Tibial artery (tissue), 4 donors: ENCODE measurements at regions of chr11 and their contacts with region 1.

Region 1: DNA sequence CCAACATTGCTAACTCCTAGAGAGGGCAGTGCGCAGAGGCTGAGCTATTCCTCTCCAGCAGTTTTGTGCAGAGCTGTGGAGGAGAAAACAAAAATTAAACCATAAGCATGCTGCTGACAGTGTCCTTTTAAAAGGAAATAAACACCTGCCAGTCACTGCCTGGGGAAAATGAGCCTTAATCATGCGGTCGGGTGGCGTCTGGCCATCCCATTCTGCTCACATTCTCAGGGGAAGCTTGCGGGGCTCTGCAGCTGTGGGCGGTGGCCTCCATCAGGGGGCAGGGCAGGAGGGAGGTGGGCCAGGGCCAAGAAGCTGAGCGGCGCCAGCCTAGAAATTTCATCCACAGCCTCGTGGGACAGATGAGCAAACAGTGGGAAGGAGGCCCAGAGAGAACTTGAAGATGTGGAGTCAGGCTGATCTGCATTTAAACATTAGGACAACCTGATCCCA is 71.0 kb upstream of the TP53I11 start:
- DNase-seq: peak; percentile 89 to 95
- H3K4me3 ChIP-seq: no peak overlapping the region
- H3K27ac ChIP-seq: peak overlapping the region; percentile 41 to 61
- H3K4me1 ChIP-seq: peaks cover 0 to 39% (median 27%) of the 10 kb centered on the region in 4 donors
- H3K27me3 ChIP-seq: no peaks in the 10 kb centered on the region
- CTCF ChIP-seq: peak; percentile 3 to 9

Region 2: DNA sequence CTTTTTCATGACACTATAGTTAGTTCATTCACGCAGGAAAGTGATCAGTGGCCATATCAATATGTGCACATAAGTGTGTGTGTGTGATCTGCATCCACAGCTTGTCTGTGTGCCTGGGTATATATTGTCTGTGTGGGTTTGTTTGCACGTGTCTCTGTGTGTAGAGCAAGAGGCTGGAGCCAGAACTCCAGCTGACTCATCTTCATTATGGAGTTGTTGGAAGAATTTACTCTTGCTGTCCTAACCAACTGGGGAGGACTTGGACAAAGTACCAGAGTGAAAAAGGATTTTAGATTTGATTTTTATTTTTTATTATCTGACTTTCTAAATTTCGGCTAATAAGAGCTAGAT is 135.0 kb before region 1 on chr11:
- intact Hi-C with region 1: no loop called
- DNase-seq: no peak
- H3K4me3 ChIP-seq: no peak overlapping the region
- H3K27ac ChIP-seq: no peak overlapping the region
- H3K4me1 ChIP-seq: peaks cover 0 to 9% (median 2%) of the 10 kb centered on the region in 4 donors
- H3K27me3 ChIP-seq: no peaks in the 10 kb centered on the region
- CTCF ChIP-seq: no peak

Region 3: GRCh38 chr11:45089676-45090499 is 68.2 kb after region 1 on chr11:
- intact Hi-C with region 1: loop called (anchors 5 kb)
- DNase-seq: no peak
- H3K4me3 ChIP-seq: no peak overlapping the region
- H3K27ac ChIP-seq: peak overlapping the region; percentile 55 to 85
- H3K4me1 ChIP-seq: peaks cover 0 to 76% (median 53%) of the 10 kb centered on the region in 4 donors
- H3K27me3 ChIP-seq: no peaks in the 10 kb centered on the region
- CTCF ChIP-seq: no peak